SK-MEL-5 (cell line): ENCODE measurements at regions of chr1 and their contacts with region 1.

Region 1: DNA sequence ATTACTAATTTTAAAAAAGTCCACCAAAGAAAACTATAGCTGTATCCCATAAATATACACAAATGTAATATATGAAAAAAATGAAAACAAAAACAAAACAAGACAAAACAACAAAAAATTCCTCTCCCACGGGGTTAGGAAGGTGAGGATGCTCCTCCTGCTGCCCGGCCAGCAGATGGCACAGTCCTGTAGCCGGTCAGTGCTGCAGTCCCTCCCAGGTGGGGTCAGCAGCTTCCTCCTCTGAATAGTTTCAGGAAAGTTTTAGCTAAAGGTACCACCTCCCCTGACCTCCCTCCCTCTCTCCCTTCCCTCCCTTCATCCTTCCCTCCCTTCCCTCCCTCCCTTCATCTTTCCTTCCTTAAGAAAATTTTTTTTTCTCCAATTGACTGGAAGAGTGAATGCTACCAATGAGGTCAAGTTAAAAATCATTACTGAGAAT is 67.8 kb upstream of the BCL10 start:
- DNase-seq: peak; percentile 56

Region 2: DNA sequence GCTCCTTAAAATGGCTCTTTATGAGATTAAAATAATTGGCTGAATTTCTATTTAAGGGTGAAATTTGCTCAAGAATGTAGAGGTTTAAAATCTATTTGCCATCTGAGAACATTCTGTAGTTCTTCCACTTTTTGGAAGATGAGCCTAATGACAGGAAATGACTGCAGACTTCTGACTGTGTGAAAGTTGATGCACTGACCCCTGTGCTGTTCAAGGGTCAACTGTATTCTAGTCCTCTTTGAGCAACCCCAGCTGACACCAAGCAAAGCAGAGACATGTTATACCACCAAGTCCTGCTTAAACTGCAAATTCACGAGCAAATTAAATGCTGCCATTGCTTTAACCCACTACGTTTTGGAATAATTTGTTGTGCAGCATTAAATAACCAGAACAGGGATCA is 94.1 kb after region 1 on chr1:
- in situ Hi-C with region 1: no loop called
- DNase-seq: no peak

Region 3: DNA sequence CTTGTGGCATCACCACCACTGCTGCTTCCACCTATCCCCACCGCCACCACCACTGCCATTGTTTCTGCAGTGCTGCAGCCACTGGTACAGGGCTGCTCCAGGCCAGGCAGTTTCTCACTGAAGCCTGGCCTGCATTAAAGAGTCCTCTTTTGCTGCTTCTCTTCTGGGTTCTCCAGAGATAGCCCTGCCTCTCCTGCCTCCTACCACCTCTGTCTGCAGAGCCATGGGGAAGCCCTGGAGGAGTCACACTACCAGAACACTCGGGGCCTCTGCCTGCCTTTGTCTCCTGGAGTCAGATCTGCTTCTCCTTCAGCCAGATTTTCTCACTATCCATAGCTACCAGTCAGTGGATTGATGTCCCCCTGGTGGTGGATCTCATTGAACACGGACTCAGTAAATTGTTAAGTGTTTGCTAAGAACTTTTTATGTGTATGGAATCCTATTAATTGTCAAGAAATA is 158.4 kb after region 1 on chr1:
- in situ Hi-C with region 1: loop called (anchors 25 kb)
- DNase-seq: peak; percentile 80